ENCODE measurements at regions of chr19 and their contacts with region 1.

Region 1: GRCh38 chr19:27860309-27860934 is 1352.5 kb downstream of the UQCRFS1 start:
- DNase-seq: no peak

Region 2: DNA sequence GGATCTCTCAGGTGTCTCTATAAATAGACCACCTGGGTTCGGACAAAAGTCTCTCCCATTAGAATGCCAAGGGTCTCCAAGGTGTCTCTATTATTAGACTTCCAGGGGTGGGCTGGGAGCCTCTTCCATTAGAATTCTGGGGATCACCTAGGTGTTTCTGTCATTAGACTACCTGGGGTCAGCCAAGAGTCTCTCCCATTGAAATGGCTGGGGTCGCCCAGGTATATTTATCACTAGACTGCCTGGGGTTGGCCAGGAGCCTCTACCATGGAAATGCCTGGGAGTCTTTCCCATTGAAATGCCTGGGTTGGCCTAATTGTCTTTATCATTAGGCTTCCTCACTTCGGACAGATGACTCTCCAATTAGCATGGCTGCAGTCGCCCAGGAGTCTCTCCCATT is 213.0 kb before region 1 on chr19:
- intact Hi-C with region 1: no loop called
- DNase-seq: no peak

Region 3: DNA sequence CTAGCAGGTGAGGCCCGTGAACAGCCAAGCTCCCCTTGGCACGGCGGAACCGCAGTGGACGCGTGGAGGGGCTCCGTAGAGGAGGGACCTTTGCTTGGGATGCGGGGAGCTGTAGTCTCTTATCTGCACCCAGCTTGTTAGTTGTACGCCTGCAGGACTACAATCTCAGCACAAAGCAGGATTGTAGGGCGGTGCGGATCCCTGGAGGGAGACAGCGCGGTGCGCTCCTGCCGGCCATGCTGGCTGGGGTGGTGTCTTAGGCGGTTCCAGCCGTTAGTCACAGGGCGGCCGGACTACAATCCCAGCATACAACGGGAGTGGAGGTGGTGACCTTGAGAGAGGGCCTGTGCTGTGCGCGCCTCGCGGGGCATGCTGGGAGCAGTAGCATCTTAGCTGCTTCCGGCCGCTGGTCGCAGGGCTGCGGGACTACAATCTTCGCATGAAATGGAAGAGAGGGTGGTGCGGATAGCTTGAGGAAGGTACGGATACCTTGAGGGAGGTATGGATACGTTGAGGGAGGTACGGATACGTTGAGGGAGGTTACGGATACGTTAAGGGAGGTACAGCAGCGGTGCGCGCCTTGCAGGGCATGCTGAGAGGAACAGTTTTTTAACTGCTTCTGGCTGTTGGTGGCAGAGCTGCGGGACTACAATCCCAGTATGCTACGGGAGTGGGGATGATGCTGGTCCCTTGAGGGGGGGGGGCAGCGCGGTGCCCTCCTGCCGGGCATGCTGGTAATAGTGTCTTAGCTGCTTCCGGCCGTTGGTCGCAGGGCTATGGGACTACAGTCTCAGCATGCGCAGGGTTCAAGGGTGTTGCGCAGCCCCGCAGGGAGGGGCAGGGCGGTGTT is 66.6 kb before region 1 on chr19:
- intact Hi-C with region 1: no loop called
- DNase-seq: peak; percentile 98

Region 4: GRCh38 chr19:27822336-27822735 is 38.1 kb before region 1 on chr19:
- intact Hi-C with region 1: no loop called
- DNase-seq: no peak

Region 5: DNA sequence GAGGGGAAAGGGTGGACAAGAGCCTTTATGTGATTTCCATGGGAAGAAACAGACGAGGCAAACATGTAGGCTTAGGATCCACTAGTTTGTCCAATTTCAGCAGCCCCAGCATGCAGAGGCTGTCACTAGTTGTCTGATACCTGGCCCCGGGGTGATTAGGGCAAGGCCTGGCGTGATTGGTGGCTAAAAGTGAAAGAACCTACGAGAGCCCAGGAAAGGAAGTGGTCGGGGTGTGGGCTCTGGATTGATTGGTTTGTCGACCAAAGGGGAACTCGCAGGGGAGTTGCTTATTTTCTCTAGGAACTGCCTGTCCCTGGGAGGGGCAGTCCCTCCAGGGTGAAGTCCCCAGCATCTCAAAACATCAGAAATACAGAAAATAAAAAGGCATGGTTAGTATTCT is 1416.7 kb after region 1 on chr19:
- intact Hi-C with region 1: loop called in 1 of 2 experiments (anchors 10 kb)
- DNase-seq: no peak